Activated naive CD4-positive, alpha-beta T cell treated with anti-CD3 and anti-CD28 coated beads, Interleukin-2, amount 10 ng/mL, durations not matched to agents 7 days and 5 days (primary cell): ENCODE measurements at regions of chr11 and their contacts with region 1.

Region 1: GRCh38 chr11:19060629-19061028 is at the start of gene MRGPRX2:
- DNase-seq: no peak
- H3K4me3 Mint-ChIP-seq: no peak within 1 kb of the TSS
- H3K27ac Mint-ChIP-seq: no peak within 1 kb of the TSS
- H3K4me1 Mint-ChIP-seq: peaks cover 16% of the 10 kb centered on the region
- H3K27me3 Mint-ChIP-seq: peaks cover 8% of the 10 kb centered on the region

Region 2: GRCh38 chr11:19071255-19071654 is 10.6 kb after region 1 on chr11:
- CTCF ChIA-PET with region 1: interaction called, 17 read pairs
- DNase-seq: peak; percentile 66
- H3K4me3 Mint-ChIP-seq: no peak overlapping the region
- H3K27ac Mint-ChIP-seq: no peak overlapping the region
- H3K4me1 Mint-ChIP-seq: peaks cover 4% of the 10 kb centered on the region
- H3K27me3 Mint-ChIP-seq: peaks cover 9% of the 10 kb centered on the region